SK-N-SH (cell line): ENCODE measurements at regions of chr17 and their contacts with region 1.

Region 1: GRCh38 chr17:47239619-47240374 is 13.8 kb upstream of the ITGB3 start:
- DNase-seq: peak; percentile 77
- H3K4me3 ChIP-seq: no peak overlapping the region
- H3K27ac ChIP-seq: peak overlapping the region; percentile 82 to 91
- H3K4me1 ChIP-seq: peaks cover 15% of the 10 kb centered on the region in 2 experiments
- H3K27me3 ChIP-seq: no peaks in the 10 kb centered on the region
- CTCF ChIP-seq: no peak
- EP300 ChIP-seq: peak in 1 of 2 experiments; percentile 92; a peak in 2 of 4 replicates
- RAD21 ChIP-seq: no peak

Region 2: DNA sequence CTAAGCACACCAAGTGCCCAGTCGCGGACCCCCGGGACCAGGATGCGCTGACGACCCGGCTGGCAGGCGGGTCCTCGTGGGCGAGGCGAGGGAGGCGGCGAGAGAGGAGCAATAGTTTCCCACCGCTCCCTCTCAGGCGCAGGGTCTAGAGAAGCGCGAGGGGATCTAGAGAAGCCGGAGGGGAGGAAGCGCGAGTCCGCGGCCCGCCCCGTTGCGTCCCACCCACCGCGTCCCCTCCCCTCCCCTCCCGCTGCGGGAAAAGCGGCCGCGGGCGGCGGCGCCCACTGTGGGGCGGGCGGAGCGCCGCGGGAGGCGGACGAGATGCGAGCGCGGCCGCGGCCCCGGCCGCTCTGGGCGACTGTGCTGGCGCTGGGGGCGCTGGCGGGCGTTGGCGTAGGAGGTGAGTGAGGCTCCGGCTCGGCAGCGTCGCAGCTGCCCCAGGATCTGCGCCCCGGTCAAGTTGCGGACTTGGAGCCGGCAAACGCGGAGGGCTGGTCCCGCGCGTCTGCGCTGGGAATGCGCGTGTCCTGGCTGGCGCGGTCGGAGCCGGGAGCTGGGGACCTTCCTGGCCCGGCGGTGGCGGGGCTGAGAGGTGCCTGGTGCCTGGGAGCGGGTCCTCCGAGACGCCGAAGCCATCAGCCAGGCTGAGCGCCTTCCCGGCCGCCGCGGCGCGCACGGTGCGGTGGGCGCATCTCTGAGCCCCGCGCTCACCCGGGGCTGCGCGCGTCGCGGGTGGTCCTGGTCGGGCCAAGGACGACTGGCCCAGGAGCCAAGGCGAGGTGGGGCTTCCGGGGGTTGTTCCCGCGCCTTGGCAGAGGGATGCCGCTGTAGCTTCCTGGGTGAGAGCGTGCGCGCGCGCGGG is 14.0 kb after region 1 on chr17 and contains the start of gene ITGB3:
- CTCF ChIA-PET with region 1: interaction called, 17 read pairs
- POLR2A ChIA-PET with region 1: no interaction called
- DNase-seq: peak; percentile 96
- H3K4me3 ChIP-seq: peak within 1 kb of the TSS; percentile 64 to 72
- H3K27ac ChIP-seq: peak within 1 kb of the TSS in 1 of 2 experiments; percentile 26; a peak in 1 of 4 replicates
- H3K4me1 ChIP-seq: peaks cover 4 to 9% of the 10 kb centered on the region in 2 experiments; a peak in 1 of 4 replicates
- H3K27me3 ChIP-seq: no peaks in the 10 kb centered on the region
- CTCF ChIP-seq: peak; percentile 56
- EP300 ChIP-seq: no peak
- RAD21 ChIP-seq: peak; percentile 50
- polyA plus RNA-seq, gene ITGB3: 4.4 and 4.6 TPM in 2 replicates